Naive thymus-derived CD4-positive, alpha-beta T cell (primary cell): ENCODE measurements at regions of chr3 and their contacts with region 1.

Region 1: GRCh38 chr3:10945683-10946287 is 46.8 kb upstream of the SLC6A1 start:
- DNase-seq: peak in 6 of 9 donors; percentile 11 to 57 (median 20)
- ATAC-seq: peak; percentile 69
- H3K4me3 ChIP-seq: no peak overlapping the region
- H3K4me3 Mint-ChIP-seq: no peak overlapping the region
- H3K27ac ChIP-seq: no peak overlapping the region
- H3K27ac Mint-ChIP-seq: no peak overlapping the region
- H3K4me1 ChIP-seq: no peaks in the 10 kb centered on the region
- H3K4me1 Mint-ChIP-seq: no peaks in the 10 kb centered on the region
- H3K27me3 ChIP-seq: no peaks in the 10 kb centered on the region
- H3K27me3 Mint-ChIP-seq: peaks cover 3 to 27% (median 17%) of the 10 kb centered on the region in 5 donors

Region 2: DNA sequence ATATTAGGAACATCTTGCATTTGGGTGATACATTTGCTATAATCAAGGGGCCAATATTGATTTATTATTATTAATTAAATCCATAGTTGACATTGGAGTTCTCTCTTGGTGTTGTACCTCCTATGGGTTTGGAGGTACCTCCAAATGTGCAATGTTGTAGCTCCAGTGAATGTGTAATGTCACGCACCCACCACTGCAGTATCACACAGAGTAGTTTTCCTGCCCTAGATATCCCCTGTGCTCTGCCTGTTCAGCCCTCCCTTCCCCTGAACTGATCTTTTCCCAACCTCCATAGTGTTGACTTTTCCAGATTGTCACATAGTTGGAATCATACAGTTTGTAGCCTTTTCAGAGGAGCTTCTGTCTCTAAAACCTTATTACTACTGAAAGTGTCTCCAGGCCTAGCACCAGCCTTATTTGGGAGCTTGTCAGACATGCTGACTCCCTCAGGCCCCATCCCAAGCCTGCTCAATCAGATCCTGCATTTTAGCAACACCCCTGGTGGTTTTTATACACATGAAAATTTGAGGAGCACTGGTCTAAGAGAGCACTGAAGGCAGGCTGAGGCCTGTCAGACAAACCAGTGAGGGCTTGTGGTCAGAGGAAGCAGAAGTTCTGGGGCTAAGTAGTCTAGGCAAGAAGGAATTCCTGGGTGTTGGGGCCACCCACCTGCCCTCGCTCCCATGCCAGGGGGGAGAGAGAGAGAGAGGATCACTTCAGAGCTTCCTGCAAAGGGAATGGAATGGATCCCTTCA is 56.4 kb before region 1 on chr3:
- CTCF ChIA-PET with region 1: no interaction called
- POLR2A ChIA-PET with region 1: no interaction called
- intact Hi-C with region 1: no loop called
- DNase-seq: no peak
- ATAC-seq: no peak
- H3K4me3 ChIP-seq: no peak overlapping the region
- H3K4me3 Mint-ChIP-seq: no peak overlapping the region
- H3K27ac ChIP-seq: no peak overlapping the region
- H3K27ac Mint-ChIP-seq: no peak overlapping the region
- H3K4me1 ChIP-seq: no peaks in the 10 kb centered on the region
- H3K4me1 Mint-ChIP-seq: no peaks in the 10 kb centered on the region
- H3K27me3 ChIP-seq: no peaks in the 10 kb centered on the region
- H3K27me3 Mint-ChIP-seq: peaks cover 0 to 28% (median 10%) of the 10 kb centered on the region in 5 donors

Region 3: DNA sequence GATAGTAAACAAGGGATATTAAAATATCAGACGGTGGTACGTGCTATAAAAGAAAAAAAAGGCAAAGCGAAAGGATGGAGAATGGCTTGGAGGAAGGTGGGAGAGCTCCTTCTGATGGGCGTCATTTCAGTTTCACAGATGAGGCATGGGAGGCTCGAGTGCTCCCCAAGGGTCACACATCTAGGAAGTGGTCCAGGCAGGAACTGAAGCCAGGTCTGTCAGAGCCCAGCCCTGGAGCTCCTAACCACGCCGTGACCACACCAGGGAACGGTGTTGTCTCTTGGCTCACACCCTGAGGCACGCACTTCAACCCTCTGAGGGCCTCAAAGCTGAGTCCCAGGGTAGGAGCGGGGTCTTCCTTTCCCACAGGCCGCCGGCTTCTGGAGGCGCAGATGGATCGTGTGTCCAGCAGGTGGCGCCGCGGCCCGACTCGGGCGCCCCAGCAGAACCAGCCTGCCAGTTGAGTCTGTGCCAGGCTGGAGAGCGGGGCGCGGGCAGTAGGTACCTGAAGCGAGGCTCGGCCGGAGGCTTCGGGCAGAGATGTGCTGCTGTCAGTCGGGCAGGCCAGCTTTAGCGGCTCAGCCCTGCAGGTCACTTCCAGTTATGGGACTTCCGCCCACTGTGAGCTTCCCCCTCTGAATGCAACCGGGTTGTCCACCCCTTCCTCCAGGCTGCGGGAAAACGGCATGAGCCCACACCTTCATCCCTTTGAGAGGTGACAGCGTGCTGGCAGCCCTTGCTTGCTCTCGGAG is 114.9 kb after region 1 on chr3:
- CTCF ChIA-PET with region 1: no interaction called
- POLR2A ChIA-PET with region 1: no interaction called
- intact Hi-C with region 1: loop called in 1 of 2 experiments (anchors 1 kb)
- DNase-seq: peak in 6 of 9 donors; percentile 11 to 55 (median 26)
- ATAC-seq: peak; percentile 63
- H3K4me3 ChIP-seq: no peak overlapping the region
- H3K4me3 Mint-ChIP-seq: peak overlapping the region in 1 of 10 donors; percentile 18
- H3K27ac ChIP-seq: no peak overlapping the region
- H3K27ac Mint-ChIP-seq: no peak overlapping the region
- H3K4me1 ChIP-seq: no peaks in the 10 kb centered on the region
- H3K4me1 Mint-ChIP-seq: peaks cover 0 to 5% (median 0%) of the 10 kb centered on the region in 7 donors
- H3K27me3 ChIP-seq: no peaks in the 10 kb centered on the region
- H3K27me3 Mint-ChIP-seq: peaks cover 2 to 26% (median 20%) of the 10 kb centered on the region in 5 donors